Dendritic cell treated with granulocyte-macrophage colony-stimulating factor and Interleukin-4, amounts not matched to agents 40 ng/mL and 50 ng/mL, for 4 days (primary cell): ENCODE measurements at regions of chr1 and their contacts with region 1.

Region 1: DNA sequence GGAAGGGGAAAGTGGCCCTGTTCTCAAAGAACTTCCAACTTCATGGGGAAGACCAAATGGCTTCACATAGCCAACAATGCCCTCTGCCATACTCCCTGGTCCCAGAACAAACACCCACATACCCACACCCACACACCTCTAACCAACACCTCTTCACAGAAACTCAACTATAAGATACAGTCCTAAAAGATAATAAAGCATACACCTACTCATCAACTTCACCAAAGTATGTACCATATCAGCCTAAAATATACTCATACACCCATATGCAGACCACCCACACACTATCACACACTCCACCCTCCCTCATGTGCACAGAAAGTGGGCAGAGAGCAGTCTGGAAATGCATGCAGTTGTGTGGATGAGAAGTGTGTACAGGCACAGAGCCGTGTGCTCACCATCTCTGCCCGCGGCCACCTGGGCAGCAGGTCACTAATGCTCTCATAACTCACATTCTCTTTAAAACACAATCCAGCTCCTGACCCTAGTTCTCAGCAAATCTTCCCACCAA is 27.7 kb downstream of the IQGAP3 start:
- H3K4me3 Mint-ChIP-seq: no peak overlapping the region
- H3K27ac Mint-ChIP-seq: no peak overlapping the region
- H3K4me1 Mint-ChIP-seq: peaks cover 24% of the 10 kb centered on the region
- H3K27me3 Mint-ChIP-seq: no peaks in the 10 kb centered on the region

Region 2: DNA sequence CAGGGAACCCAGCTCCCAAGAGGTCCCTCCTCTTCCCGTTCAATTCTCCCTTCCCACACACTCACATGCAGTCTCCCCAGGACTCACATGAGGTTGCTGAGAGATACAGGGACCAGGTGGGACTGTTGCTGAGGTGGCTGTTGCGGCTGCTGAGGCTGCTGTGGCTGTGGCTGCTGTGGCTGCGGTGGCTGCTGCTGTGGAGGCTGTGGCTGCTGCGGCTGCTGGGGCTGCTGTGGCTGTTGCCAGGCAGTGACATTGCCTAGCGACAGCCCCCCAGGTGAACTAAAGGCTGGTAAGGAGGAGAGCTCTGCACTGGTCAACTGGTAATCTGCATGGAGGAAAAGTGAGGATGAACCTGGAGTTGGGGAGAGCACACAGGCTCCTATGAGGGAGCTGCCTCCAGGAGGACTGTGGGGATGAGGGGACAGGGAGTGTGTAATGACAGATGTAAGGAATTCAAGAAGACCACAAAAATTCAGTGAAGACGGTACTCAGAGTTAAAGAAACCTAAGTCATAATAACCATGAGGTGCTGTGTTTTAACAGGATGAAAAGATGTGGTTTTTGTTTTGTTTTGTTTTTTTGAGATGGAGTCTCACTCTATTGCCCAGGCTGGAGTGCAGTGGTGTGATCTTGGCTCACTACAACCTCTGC is 75.8 kb before region 1 on chr1:
- intact Hi-C with region 1: loop called (anchors 2 kb)
- H3K4me3 Mint-ChIP-seq: no peak overlapping the region
- H3K27ac Mint-ChIP-seq: no peak overlapping the region
- H3K4me1 Mint-ChIP-seq: peaks cover 34% of the 10 kb centered on the region
- H3K27me3 Mint-ChIP-seq: no peaks in the 10 kb centered on the region

Region 3: GRCh38 chr1:156510709-156511108 is 33.9 kb before region 1 on chr1:
- intact Hi-C with region 1: no loop called
- H3K4me3 Mint-ChIP-seq: no peak overlapping the region
- H3K27ac Mint-ChIP-seq: peak overlapping the region; percentile 2
- H3K4me1 Mint-ChIP-seq: peaks cover 49% of the 10 kb centered on the region
- H3K27me3 Mint-ChIP-seq: no peaks in the 10 kb centered on the region